ENCODE measurements at regions of chr1 and their contacts with region 1.

Region 1: DNA sequence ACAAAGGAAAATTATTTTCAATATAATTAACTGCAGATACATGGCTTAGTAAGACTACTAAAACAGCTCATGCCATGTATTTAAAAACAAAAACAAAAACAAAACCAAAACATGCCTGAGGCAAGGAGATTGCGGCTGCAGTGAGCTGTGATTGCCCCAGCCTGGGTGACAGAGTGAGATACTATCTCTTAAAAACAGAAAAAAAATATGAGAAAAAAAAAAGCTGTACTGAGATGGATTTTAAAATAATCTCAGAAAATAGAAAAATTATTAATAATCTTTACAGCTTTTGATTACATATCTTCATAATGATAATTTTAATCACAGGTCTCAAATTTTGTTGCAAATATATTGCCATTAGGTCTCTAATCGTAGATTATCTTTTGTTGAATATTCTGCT is 24.0 kb upstream of the LIN9 start:
- DNase-seq: peak; percentile 11
- H3K4me3 Mint-ChIP-seq: peak overlapping the region; percentile 8
- H3K27ac Mint-ChIP-seq: no peak overlapping the region
- H3K4me1 Mint-ChIP-seq: peaks cover 7% of the 10 kb centered on the region
- H3K27me3 Mint-ChIP-seq: peaks cover 2% of the 10 kb centered on the region

Region 2: DNA sequence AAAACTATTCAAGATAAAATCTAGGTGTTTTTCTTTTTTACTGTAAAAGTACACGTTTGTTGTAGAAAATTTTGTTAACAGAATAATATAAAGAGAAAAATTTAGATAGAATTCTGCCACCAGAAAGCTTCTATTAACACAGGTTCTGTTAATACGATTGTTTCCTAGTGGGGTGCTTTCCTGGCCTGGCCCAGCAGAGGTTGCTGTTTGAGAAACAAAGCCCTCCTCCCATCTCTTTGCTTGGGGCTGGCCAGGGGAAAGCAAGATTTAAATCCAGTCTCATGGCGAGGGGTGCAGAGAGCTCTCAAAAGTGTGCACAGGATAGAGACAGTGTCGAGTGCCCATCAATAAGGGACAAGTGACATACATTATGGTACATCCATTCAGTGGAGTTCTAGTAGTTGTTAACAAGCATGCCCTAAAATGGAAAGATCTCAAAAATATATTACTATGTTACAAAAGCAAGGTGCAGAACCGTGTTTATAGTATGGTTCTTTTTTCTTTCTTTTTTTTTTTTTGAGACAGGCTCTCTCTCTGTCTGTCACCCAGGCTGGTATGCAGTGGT is 131.8 kb before region 1 on chr1:
- intact Hi-C with region 1: loop called (anchors 1 kb)
- DNase-seq: no peak
- H3K4me3 Mint-ChIP-seq: no peak overlapping the region
- H3K27ac Mint-ChIP-seq: no peak overlapping the region
- H3K4me1 Mint-ChIP-seq: no peaks in the 10 kb centered on the region
- H3K27me3 Mint-ChIP-seq: peaks cover 12% of the 10 kb centered on the region

Region 3: DNA sequence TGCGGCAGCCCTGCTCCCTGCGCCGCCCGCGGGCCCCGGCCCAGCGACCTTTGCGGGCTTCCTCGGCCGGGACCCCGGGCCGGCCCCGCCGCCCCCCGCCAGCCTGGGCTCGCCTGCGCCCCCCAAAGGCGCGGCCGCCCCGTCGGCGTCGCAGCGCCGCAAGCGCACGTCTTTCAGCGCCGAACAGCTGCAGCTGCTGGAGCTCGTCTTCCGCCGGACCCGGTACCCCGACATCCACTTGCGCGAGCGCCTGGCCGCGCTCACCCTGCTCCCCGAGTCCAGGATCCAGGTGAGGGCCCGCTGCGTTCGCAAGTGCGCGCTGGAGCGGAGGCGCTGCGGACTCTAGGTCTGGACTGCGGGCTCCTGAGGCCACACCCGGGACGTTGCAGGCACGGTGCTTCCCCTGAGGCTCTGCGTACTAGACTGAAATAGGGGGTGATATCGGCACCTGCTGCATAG is 109.1 kb before region 1 on chr1:
- intact Hi-C with region 1: loop called (anchors 5 kb)
- DNase-seq: peak; percentile 11
- H3K4me3 Mint-ChIP-seq: peak overlapping the region; percentile 78
- H3K27ac Mint-ChIP-seq: no peak overlapping the region
- H3K4me1 Mint-ChIP-seq: peaks cover 6% of the 10 kb centered on the region
- H3K27me3 Mint-ChIP-seq: peaks cover 38% of the 10 kb centered on the region

Region 4: GRCh38 chr1:226308723-226309315 is 24.1 kb before region 1 on chr1 and contains the start of gene LIN9:
- intact Hi-C with region 1: loop called (anchors 2 kb)
- DNase-seq: peak; percentile 90
- H3K4me3 Mint-ChIP-seq: peak within 1 kb of the TSS; percentile 95
- H3K27ac Mint-ChIP-seq: peak within 1 kb of the TSS; percentile 86
- H3K4me1 Mint-ChIP-seq: peaks cover 50% of the 10 kb centered on the region
- H3K27me3 Mint-ChIP-seq: peaks cover 16% of the 10 kb centered on the region
- total RNA-seq, gene LIN9: 11.7 and 12.1 TPM in 2 replicates

Region 5: DNA sequence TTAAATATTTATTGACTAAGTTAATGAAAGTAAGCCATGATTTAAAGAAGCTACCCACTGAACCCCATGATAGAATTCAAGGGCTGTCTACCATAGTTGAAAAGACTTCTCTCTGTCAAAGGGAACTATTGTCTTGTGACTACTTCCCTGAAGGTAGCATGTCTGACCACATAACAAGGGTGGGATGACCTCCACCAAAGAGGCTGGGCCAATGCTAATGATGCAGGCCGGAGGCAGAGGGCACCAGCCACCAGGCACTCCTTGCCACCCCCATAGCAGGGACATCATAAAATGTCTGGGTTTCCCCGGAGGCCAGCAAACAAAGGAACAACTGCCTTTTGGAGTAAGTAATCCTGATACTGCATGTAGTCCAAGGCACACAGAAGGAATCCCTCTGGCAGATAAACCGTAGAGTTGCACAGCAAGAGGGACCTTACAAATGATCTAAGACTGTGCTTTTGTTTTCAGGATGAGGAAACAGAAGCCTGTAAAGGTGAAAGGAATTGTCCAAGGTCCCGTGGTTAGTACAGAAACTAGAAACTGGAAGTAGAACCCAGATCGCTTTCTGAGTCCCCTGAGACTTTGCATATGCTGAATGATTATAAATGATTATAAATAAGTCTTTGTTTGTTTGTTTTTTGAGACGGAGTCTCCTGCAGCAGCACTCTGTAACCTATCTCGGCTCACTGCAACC is 439.6 kb after region 1 on chr1:
- intact Hi-C with region 1: no loop called
- DNase-seq: no peak
- H3K4me3 Mint-ChIP-seq: no peak overlapping the region
- H3K27ac Mint-ChIP-seq: no peak overlapping the region
- H3K4me1 Mint-ChIP-seq: peaks cover 8% of the 10 kb centered on the region
- H3K27me3 Mint-ChIP-seq: peaks cover 10% of the 10 kb centered on the region

Measured in activated T-helper 1 cell treated with anti-CD3 and anti-CD28 coated beads, Interleukin-12 subunit alpha, Interleukin-12 subunit beta, Interleukin-2, Interleukin-4 antibody, amounts not matched to agents 30 ng/mL and 10 ng/mL and 1 ng/mL, durations not matched to agents 14 hours and 24 hours and 36 hours (primary cell).